HCT116 (cell line): ENCODE measurements at regions of chr3 and their contacts with region 1.

Region 1: DNA sequence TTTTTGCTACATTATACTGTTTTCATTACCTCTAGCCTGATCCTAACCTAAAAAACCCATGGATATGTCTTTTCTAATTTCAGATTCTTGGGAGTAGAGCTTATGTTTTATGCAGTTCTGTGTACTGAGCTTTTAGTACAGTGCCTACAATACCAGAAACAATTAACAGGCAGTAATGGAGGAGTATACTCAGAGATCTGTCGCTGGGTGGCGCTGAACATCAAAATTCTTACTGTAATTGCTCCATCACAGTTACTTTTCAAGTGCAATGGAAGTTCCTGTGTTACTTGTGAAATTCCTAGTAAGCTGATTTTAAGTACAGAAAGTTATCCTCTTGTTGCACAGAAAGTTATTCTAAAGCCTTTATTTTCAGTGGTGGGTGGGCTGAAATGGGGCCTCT is 66.9 kb downstream of the RNF13 start:
- DNase-seq: peak; percentile 24
- ATAC-seq: peak; percentile 89
- H3K4me3 ChIP-seq: no peak overlapping the region
- H3K27ac ChIP-seq: no peak overlapping the region
- H3K4me1 ChIP-seq: no peaks in the 10 kb centered on the region
- H3K27me3 ChIP-seq: no peaks in the 10 kb centered on the region
- CTCF ChIP-seq: peak; percentile 28 to 75 (median 66); a peak in 5 of 6 replicates
- POLR2A ChIP-seq: no peak
- RAD21 ChIP-seq: peak; percentile 53

Region 2: DNA sequence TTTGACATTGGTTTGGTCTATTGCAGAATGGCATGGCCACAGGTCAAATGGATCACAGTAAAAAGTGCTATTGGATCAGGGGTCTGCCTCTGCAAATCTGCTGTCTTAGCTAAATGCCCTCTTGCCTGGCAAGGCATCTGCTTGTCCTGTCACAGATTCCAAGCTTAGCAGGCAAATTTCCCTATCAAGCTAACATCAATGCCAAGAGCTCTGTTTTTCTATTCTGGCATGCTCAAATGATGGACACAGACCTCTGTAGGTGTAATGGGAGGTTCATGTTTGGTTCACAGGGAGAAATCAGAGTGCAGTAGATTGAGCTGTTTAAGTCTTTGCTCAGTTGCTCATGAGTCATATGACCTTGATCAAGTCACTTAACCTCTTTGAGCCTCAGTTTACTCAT is 1107.0 kb before region 1 on chr3:
- CTCF ChIA-PET with region 1: no interaction called
- POLR2A ChIA-PET with region 1: no interaction called
- RAD21 ChIA-PET with region 1: no interaction called
- intact Hi-C with region 1: no loop called
- DNase-seq: no peak
- ATAC-seq: no peak
- H3K4me3 ChIP-seq: no peak overlapping the region
- H3K27ac ChIP-seq: no peak overlapping the region
- H3K4me1 ChIP-seq: no peaks in the 10 kb centered on the region
- H3K27me3 ChIP-seq: no peaks in the 10 kb centered on the region
- CTCF ChIP-seq: no peak
- POLR2A ChIP-seq: no peak
- RAD21 ChIP-seq: no peak

Region 3: DNA sequence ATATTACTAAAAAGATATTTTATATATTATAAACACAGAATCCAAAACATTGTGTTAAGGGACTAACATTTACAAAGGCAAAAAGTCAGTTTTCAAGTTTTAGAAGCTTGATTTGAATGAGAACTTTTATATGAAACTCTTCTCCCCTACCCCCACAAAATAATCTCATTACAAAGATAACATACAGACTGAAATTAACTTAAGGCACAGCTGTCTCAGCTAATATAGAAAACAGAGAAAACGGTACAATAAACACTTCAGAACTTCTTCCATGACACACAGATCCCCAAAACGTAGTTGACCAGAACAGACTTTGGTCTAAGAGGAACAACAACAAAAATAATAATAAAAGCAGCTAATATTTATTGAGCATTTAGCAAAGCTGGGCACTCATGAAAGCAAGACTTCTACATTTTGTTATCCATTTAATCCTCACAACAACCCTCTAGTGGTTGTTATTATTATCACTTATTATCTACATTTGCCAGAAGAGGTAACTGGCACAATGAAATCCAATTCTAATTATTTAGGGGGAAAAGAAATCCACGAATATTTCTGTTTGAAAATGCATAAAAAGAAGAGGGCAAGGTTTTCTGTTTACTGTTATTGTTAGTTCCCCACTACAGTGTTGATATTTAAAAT is 22.7 kb after region 1 on chr3:
- CTCF ChIA-PET with region 1: interaction called, 17 read pairs
- POLR2A ChIA-PET with region 1: no interaction called
- RAD21 ChIA-PET with region 1: no interaction called
- intact Hi-C with region 1: no loop called
- DNase-seq: no peak
- ATAC-seq: no peak
- H3K4me3 ChIP-seq: no peak overlapping the region
- H3K27ac ChIP-seq: no peak overlapping the region
- H3K4me1 ChIP-seq: peaks cover 3 to 15% of the 10 kb centered on the region in 2 experiments; a peak in 2 of 4 replicates
- H3K27me3 ChIP-seq: no peaks in the 10 kb centered on the region
- CTCF ChIP-seq: peak; percentile 12 to 50 (median 27); a peak in 3 of 6 replicates
- POLR2A ChIP-seq: no peak
- RAD21 ChIP-seq: no peak

Region 4: GRCh38 chr3:149990423-149990948 is 110.6 kb after region 1 on chr3:
- CTCF ChIA-PET with region 1: no interaction called
- POLR2A ChIA-PET with region 1: no interaction called
- RAD21 ChIA-PET with region 1: no interaction called
- intact Hi-C with region 1: no loop called
- DNase-seq: no peak
- ATAC-seq: no peak
- H3K4me3 ChIP-seq: no peak overlapping the region
- H3K27ac ChIP-seq: no peak overlapping the region
- H3K4me1 ChIP-seq: no peaks in the 10 kb centered on the region
- H3K27me3 ChIP-seq: no peaks in the 10 kb centered on the region
- CTCF ChIP-seq: no peak
- POLR2A ChIP-seq: no peak
- RAD21 ChIP-seq: no peak